GM10248 (cell line): ENCODE measurements at regions of chr5 and their contacts with region 1.

Region 1: GRCh38 chr5:9361835-9362234 is 184.0 kb downstream of the SEMA5A start:
- DNase-seq: peak; percentile 70
- CTCF ChIP-seq: peak; percentile 72

Region 2: DNA sequence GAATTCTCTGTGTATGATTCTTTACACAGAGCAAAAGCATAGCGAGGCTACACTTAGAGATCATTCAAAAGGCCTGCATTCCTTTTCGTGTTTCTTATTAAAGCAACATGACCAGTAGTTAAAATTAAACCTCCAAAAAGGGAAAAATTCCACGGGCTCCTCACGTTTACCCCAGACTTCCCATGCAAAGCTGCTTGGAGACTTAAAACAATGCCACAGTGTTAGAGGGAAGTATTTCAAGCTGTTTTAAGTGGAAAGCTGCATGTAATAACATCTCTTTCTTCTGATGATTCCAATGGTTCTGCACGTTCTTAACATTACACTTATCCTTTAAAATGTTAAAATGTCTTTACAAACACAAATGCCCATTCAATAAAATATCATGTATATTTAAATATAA is 221.1 kb before region 1 on chr5:
- CTCF ChIA-PET with region 1: no interaction called
- POLR2A ChIA-PET with region 1: no interaction called
- DNase-seq: no peak
- CTCF ChIP-seq: no peak

Region 3: GRCh38 chr5:9381464-9381863 is 19.6 kb after region 1 on chr5:
- CTCF ChIA-PET with region 1: interaction called, 45 read pairs
- POLR2A ChIA-PET with region 1: no interaction called
- DNase-seq: peak; percentile 39
- CTCF ChIP-seq: no peak

Region 4: GRCh38 chr5:9483243-9483642 is 121.4 kb after region 1 on chr5:
- CTCF ChIA-PET with region 1: no interaction called
- POLR2A ChIA-PET with region 1: no interaction called
- DNase-seq: no peak
- CTCF ChIP-seq: no peak

Region 5: DNA sequence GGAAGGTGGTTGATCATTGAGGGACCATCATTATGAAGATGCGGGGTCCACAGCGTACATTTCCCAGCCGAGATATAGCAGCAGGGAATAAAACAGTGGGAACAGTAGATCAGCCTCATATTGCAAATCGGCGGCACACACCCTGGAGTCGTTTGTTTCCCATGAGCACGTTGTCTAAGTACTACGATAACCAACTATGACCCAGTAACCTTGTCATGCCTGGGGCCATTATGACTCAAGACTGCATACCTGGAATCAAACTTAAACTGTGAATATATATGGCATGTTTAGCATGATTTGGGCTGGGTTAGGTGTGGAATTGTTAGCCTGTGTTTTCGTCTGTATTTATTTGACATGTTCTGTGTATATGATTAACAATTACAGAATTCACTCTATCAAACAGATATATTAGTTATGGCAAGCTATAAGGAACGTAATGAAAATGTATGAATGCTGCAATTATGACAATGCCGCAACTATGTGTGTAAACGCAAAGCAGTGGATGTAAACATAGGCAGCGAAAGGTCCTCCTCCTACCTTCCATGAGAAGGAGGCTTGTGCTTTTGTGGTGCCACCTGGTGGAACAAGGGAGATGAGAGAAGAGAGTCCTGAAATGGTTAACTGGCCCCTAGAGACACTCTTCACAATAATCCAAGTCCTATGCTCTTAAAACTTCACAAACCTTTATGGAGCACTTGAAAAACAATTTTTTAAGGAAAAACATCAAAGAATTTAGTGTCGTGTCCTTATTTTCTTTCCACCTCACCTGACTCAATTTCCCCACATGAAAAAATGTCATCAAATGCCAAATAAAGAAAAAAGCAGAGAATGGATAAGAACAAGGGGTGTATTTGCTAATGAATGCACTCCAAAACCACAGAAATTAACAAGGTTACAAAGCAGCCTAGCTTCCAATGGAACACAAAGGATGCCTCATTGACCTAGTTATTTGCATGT is 137.0 kb after region 1 on chr5:
- CTCF ChIA-PET with region 1: interaction called, 10 read pairs
- POLR2A ChIA-PET with region 1: no interaction called
- DNase-seq: no peak
- CTCF ChIP-seq: peak; percentile 35